ENCODE measurements at regions of chr2 and their contacts with region 1.

Region 1: GRCh38 chr2:135741395-135742324 is at the start of gene UBXN4:
- DNase-seq: peak; percentile 93 to 99 (median 98)

Region 2: GRCh38 chr2:135876066-135876711 is 134.5 kb after region 1 on chr2 and contains the start of gene MCM6:
- intact Hi-C with region 1: loop called (anchors 5 kb)
- DNase-seq: peak; percentile 90 to 99 (median 95)